ENCODE measurements at regions of chr19 and their contacts with region 1.

Region 1: DNA sequence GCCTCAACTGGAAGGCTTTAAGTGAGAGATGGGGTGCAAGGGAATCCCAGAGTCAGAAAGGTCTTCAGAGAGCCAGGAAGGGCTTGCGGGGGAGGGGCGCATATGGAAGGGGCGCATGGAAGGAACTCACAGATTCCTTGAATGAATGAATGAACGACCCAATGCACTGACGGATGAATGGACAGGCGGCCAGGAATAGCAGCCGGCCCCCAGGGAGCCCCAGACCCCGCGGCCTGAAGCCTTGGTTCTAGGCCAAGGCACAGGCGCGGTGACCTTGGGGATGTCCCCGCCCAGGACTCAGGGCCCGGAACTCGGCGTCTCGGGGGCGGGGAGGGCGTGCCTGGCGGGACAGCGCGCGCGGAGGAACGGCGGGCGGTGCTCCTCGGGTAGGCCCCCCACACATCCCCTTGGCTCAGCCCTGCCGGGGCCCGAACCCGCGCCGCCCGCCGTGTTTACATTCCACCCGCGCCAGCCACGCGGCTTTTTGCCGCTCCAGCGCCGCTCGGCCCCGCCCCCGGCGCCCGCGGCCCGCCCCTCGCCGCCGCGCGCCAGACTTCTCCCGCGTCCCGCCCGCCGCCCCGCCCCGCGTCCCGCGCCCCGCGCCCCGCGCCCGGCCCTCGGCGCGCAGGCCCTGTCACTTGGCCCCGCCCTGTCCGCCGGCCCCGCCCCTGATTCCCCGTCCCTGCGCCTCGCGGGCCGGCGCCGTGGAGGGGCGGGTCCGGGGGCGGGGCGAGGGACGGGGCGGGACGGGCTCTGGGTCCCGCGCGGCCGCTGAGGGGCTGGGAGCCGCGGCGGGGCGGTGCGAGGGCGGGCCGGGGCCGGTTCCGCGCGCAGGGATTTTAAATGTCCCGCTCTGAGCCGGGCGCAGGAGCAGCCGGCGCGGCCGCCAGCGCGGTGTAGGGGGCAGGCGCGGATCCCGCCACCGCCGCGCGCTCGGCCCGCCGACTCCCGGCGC is at the start of gene CCNE1:
- DNase-seq: peak; percentile 84 to 98 (median 94)
- ATAC-seq: peak; percentile 95
- H3K4me3 ChIP-seq: peak within 1 kb of the TSS; percentile 54 to 58
- H3K4me3 Mint-ChIP-seq: peak within 1 kb of the TSS; percentile 93
- H3K27ac ChIP-seq: peak within 1 kb of the TSS; percentile 58 to 59
- H3K27ac Mint-ChIP-seq: peak within 1 kb of the TSS; percentile 75
- H3K4me1 ChIP-seq: peaks cover 5% of the 10 kb centered on the region
- H3K4me1 Mint-ChIP-seq: peaks cover 13% of the 10 kb centered on the region
- H3K27me3 ChIP-seq: no peaks in the 10 kb centered on the region
- H3K27me3 Mint-ChIP-seq: no peaks in the 10 kb centered on the region
- CTCF ChIP-seq: no peak
- total RNA-seq, gene CCNE1: 4.9 to 6.6 TPM

Region 2: DNA sequence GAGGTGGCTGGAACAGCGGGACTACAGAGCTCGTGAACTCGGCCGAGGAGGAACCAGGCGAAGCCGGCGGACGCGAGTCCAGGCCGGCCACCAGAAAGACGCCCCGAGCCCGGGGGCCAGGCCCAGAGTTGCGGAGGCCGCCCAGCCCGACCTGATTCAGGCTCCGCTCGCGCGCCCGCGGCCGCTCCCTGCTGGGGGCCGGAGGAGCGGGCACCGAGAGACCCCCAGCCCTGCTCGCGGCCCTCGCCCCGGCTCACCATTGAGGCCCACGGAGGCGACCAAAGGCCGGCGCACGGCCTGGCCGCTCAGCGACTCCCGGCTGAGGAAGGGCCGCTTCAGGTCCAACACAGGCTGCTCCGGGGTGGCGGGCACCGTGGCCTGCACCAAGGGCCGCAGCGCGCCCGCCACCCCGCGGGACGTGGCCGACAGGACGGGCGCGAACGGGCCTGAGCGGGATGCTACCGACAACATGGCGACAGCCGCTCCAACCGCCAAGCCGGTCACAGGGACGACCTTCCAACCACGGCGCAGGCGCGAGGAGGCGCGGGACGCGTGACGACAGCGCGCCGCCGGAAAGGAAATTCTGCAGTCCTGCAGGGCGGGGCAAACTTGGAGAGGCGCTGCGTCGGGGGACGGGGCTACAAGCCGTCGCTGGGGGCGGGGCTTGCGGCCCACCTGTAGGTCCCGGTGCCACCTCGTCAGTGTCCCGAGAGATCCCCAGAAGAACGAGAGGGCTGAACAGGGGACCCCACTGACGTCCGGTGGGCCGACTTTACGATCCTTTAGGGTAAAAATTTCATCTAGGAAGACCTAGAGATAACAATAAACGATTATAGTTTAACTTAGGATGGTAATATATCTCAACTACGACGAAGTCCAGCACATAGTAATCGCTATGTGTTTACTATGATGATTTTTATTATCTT is 598.5 kb before region 1 on chr19 and contains the start of gene UQCRFS1:
- CTCF ChIA-PET with region 1: no interaction called
- POLR2A ChIA-PET with region 1: no interaction called
- intact Hi-C with region 1: loop called in 1 of 2 experiments (anchors 5 kb)
- DNase-seq: peak; percentile 92 to 97 (median 95)
- ATAC-seq: peak; percentile 97
- H3K4me3 ChIP-seq: peak within 1 kb of the TSS; percentile 60 to 77
- H3K4me3 Mint-ChIP-seq: peak within 1 kb of the TSS; percentile 95
- H3K27ac ChIP-seq: peak within 1 kb of the TSS; percentile 80 to 89
- H3K27ac Mint-ChIP-seq: peak within 1 kb of the TSS; percentile 96
- H3K4me1 ChIP-seq: peaks cover 17% of the 10 kb centered on the region
- H3K4me1 Mint-ChIP-seq: peaks cover 46% of the 10 kb centered on the region
- H3K27me3 ChIP-seq: no peaks in the 10 kb centered on the region
- H3K27me3 Mint-ChIP-seq: peaks cover 6% of the 10 kb centered on the region
- CTCF ChIP-seq: no peak
- total RNA-seq, gene UQCRFS1: 31.5 to 31.8 TPM

Region 3: GRCh38 chr19:29665215-29665825 is 146.1 kb before region 1 on chr19 and contains the start of gene PLEKHF1:
- CTCF ChIA-PET with region 1: no interaction called
- POLR2A ChIA-PET with region 1: no interaction called
- intact Hi-C with region 1: loop called in 1 of 2 experiments (anchors 2 kb)
- DNase-seq: peak; percentile 56 to 89 (median 81)
- ATAC-seq: peak; percentile 69
- H3K4me3 ChIP-seq: peak within 1 kb of the TSS; percentile 91 to 96
- H3K4me3 Mint-ChIP-seq: peak within 1 kb of the TSS; percentile 89
- H3K27ac ChIP-seq: peak within 1 kb of the TSS; percentile 69 to 84
- H3K27ac Mint-ChIP-seq: peak within 1 kb of the TSS; percentile 94
- H3K4me1 ChIP-seq: peaks cover 57% of the 10 kb centered on the region
- H3K4me1 Mint-ChIP-seq: peaks cover 60% of the 10 kb centered on the region
- H3K27me3 ChIP-seq: no peaks in the 10 kb centered on the region
- H3K27me3 Mint-ChIP-seq: no peaks in the 10 kb centered on the region
- CTCF ChIP-seq: no peak
- total RNA-seq, gene PLEKHF1: 33.7 to 34.1 TPM

Region 4: GRCh38 chr19:29831041-29831548 is 19.7 kb after region 1 on chr19:
- CTCF ChIA-PET with region 1: interaction called, 5 read pairs
- POLR2A ChIA-PET with region 1: interaction called, 5 read pairs
- intact Hi-C with region 1: loop called (anchors 1 kb)
- DNase-seq: peak in 8 of 9 experiments; percentile 51 to 89 (median 72)
- ATAC-seq: peak; percentile 98
- H3K4me3 ChIP-seq: peak overlapping the region; percentile 10 to 17
- H3K4me3 Mint-ChIP-seq: peak overlapping the region; percentile 82
- H3K27ac ChIP-seq: peak overlapping the region; percentile 49 to 66
- H3K27ac Mint-ChIP-seq: peak overlapping the region; percentile 98
- H3K4me1 ChIP-seq: peaks cover 32% of the 10 kb centered on the region
- H3K4me1 Mint-ChIP-seq: peaks cover 45% of the 10 kb centered on the region
- H3K27me3 ChIP-seq: no peaks in the 10 kb centered on the region
- H3K27me3 Mint-ChIP-seq: no peaks in the 10 kb centered on the region
- CTCF ChIP-seq: no peak

Region 5: DNA sequence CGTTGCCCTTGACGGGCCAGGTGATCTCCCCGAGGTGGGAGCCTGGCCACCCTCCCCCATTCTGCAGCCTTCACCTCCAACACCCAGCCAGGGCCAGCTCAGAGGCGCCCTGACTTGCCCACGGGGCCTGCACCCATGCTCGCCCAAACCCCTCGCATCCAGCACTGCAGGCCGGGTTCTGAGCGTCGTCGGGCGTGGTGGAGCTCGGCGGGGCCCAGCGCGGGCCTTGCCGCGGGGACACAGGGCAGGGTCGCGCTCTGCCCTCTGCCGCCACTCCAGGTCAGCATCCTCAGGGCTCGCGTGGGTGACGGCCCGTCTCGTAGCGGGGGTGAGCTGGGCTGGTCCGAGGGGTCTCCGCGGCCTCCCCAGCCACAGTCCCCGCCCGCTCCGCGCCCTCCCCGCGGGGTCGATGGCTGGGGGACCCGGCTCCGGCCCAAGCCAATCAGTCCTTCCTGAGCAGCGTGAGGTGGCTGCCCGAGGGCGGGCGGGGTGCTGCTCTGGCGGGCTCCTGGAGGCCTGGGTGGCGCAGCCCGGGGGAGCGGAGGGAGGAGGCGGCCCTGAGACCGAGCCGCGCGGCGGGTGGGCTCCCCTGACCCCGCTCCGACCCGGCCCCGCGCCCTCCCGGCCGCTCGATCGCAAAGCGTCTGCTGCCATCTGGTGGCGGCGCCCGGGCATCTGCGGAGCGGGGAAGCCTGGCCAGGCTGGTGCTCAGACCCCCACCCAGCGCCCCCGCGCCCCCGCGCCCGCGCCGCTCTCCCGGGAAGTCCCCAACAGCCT is 61.8 kb after region 1 on chr19:
- CTCF ChIA-PET with region 1: interaction called, 4 read pairs
- POLR2A ChIA-PET with region 1: no interaction called
- intact Hi-C with region 1: loop called in 1 of 2 experiments (anchors 1 kb)
- DNase-seq: peak; percentile 39 to 84 (median 67)
- ATAC-seq: peak; percentile 78
- H3K4me3 ChIP-seq: peak overlapping the region; percentile 18 to 63
- H3K4me3 Mint-ChIP-seq: peak overlapping the region; percentile 78
- H3K27ac ChIP-seq: no peak overlapping the region
- H3K27ac Mint-ChIP-seq: no peak overlapping the region
- H3K4me1 ChIP-seq: peaks cover 4% of the 10 kb centered on the region
- H3K4me1 Mint-ChIP-seq: peaks cover 8% of the 10 kb centered on the region
- H3K27me3 ChIP-seq: peaks cover 0 to 9% of the 10 kb centered on the region in 2 experiments
- H3K27me3 Mint-ChIP-seq: peaks cover 23% of the 10 kb centered on the region
- CTCF ChIP-seq: peak; percentile 94

Region 6: GRCh38 chr19:29941828-29942403 is 130.5 kb after region 1 on chr19 and contains the start of gene URI1:
- CTCF ChIA-PET with region 1: no interaction called
- POLR2A ChIA-PET with region 1: no interaction called
- intact Hi-C with region 1: loop called (anchors 1 to 2 kb)
- DNase-seq: peak; percentile 87 to 98 (median 92)
- ATAC-seq: peak; percentile 92
- H3K4me3 ChIP-seq: peak within 1 kb of the TSS; percentile 81 to 85
- H3K4me3 Mint-ChIP-seq: peak within 1 kb of the TSS; percentile 97
- H3K27ac ChIP-seq: peak within 1 kb of the TSS; percentile 59 to 64
- H3K27ac Mint-ChIP-seq: peak within 1 kb of the TSS; percentile 94
- H3K4me1 ChIP-seq: peaks cover 40% of the 10 kb centered on the region
- H3K4me1 Mint-ChIP-seq: peaks cover 47% of the 10 kb centered on the region
- H3K27me3 ChIP-seq: peaks cover 0 to 2% of the 10 kb centered on the region in 2 experiments
- H3K27me3 Mint-ChIP-seq: peaks cover 3% of the 10 kb centered on the region
- CTCF ChIP-seq: no peak
- total RNA-seq, gene URI1: 51.3 to 56.4 TPM

Region 7: DNA sequence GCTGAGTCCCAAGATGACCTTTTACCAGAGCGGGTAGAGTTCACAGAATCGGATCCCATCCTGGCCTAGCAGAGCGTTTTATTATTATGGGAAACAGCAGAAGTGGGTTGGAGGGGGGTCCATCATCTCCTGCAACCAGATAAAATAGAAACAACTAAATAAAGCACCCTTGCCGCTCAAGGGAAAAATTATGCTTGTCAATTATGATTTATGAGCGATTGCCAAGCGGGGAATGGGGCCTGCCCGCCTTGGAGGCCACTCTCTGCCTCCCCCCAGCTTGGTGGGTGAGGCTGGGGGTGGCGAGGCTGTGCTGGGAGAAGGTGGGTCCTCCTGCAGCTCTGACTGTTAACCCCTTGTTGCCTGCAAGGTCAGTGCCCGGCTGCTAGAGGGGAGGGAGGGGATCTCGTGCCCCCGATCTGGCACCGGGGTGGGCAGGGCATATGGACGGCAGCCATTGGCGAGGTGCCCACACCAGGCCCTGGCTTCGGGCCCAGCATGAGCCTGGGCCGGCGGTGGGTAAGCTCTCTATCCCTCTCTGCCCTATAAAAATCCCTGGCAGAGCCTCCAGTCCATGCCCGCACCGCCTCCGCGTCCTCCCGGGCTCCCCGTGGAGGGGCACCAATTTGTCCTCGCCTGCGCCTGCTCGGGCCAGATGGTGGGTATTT is 259.7 kb after region 1 on chr19:
- CTCF ChIA-PET with region 1: no interaction called
- POLR2A ChIA-PET with region 1: no interaction called
- intact Hi-C with region 1: no loop called
- DNase-seq: no peak
- ATAC-seq: no peak
- H3K4me3 ChIP-seq: no peak overlapping the region
- H3K4me3 Mint-ChIP-seq: no peak overlapping the region
- H3K27ac ChIP-seq: no peak overlapping the region
- H3K27ac Mint-ChIP-seq: no peak overlapping the region
- H3K4me1 ChIP-seq: no peaks in the 10 kb centered on the region
- H3K4me1 Mint-ChIP-seq: no peaks in the 10 kb centered on the region
- H3K27me3 ChIP-seq: no peaks in the 10 kb centered on the region
- H3K27me3 Mint-ChIP-seq: peaks cover 2% of the 10 kb centered on the region
- CTCF ChIP-seq: no peak

Measured in CD8-positive, alpha-beta T cell (primary cell).